CD8-positive, alpha-beta T cell (primary cell): ENCODE measurements at regions of chr9 and their contacts with region 1.

Region 1: GRCh38 chr9:70639853-70640814 is 225.7 kb upstream of the KLF9 start:
- DNase-seq: peak in 2 of 9 experiments; percentile 30 to 33
- ATAC-seq: no peak
- H3K4me3 ChIP-seq: no peak overlapping the region
- H3K4me3 Mint-ChIP-seq: no peak overlapping the region
- H3K27ac ChIP-seq: no peak overlapping the region
- H3K27ac Mint-ChIP-seq: no peak overlapping the region
- H3K4me1 ChIP-seq: no peaks in the 10 kb centered on the region
- H3K4me1 Mint-ChIP-seq: no peaks in the 10 kb centered on the region
- H3K27me3 ChIP-seq: no peaks in the 10 kb centered on the region
- H3K27me3 Mint-ChIP-seq: peaks cover 25% of the 10 kb centered on the region
- CTCF ChIP-seq: peak; percentile 42

Region 2: DNA sequence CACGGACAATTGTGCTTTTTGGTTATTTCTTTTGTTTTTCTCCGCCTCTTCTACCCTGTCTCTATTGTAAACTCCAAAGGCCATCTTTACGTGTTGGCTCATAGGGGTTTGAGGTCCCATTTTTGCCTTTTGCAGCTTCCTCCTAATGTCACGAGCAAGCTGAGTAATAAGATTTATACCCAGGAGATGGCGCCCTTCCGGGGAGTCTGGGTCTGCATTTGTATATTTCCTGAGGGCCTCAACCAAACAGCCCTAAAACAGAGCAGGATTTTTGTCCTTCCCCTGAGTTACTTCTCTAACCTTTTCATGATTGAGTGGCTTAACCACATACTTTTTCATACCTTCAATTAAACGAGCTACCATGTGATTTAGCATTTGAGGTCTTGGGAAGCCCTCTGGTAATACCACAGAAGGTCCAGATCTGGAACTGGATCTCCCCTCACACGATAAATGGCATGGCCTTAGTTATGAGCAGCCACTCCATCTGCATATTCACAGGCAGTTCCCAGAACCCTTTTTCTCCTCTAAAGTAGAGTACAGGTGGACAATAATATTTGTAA is 830.8 kb before region 1 on chr9:
- CTCF ChIA-PET with region 1: no interaction called
- POLR2A ChIA-PET with region 1: no interaction called
- intact Hi-C with region 1: no loop called
- DNase-seq: peak in 7 of 9 experiments; percentile 16 to 59 (median 25)
- ATAC-seq: peak; percentile 52
- H3K4me3 ChIP-seq: no peak overlapping the region
- H3K4me3 Mint-ChIP-seq: no peak overlapping the region
- H3K27ac ChIP-seq: no peak overlapping the region
- H3K27ac Mint-ChIP-seq: no peak overlapping the region
- H3K4me1 ChIP-seq: no peaks in the 10 kb centered on the region
- H3K4me1 Mint-ChIP-seq: no peaks in the 10 kb centered on the region
- H3K27me3 ChIP-seq: no peaks in the 10 kb centered on the region
- H3K27me3 Mint-ChIP-seq: peaks cover 3% of the 10 kb centered on the region
- CTCF ChIP-seq: peak; percentile 34

Region 3: DNA sequence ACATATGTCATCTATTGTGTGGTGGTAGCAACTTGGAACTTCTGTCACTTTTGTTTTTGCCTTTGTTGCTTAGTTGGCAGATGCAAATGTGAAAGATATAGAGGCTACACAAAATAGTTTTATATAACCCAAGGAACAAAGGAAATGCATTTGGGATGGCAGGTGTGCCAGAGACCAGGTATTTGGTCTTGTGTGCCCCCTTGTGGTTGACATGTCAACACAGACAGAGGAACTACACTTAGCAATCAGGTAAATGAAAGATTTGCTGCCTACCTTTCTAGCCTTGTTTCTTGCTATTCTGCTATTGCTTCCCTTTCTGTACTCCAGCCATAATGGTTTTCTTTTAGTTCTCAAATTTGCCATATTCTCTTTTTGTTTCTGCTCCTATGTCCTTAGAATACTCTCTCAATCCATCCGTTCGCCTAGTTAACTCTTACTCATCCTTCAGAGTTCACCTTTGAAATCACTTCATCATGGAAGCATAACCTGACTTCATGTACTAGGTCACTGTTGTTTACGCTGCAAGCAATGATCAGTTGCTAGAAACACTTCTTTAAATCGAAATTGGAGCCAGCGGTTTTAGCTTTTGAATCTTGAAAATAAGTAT is 361.7 kb after region 1 on chr9:
- CTCF ChIA-PET with region 1: no interaction called
- POLR2A ChIA-PET with region 1: no interaction called
- intact Hi-C with region 1: loop called in 1 of 2 experiments (anchors 5 kb)
- DNase-seq: peak in 2 of 9 experiments; percentile 4 to 17
- ATAC-seq: no peak
- H3K4me3 ChIP-seq: no peak overlapping the region
- H3K4me3 Mint-ChIP-seq: no peak overlapping the region
- H3K27ac ChIP-seq: no peak overlapping the region
- H3K27ac Mint-ChIP-seq: no peak overlapping the region
- H3K4me1 ChIP-seq: no peaks in the 10 kb centered on the region
- H3K4me1 Mint-ChIP-seq: no peaks in the 10 kb centered on the region
- H3K27me3 ChIP-seq: no peaks in the 10 kb centered on the region
- H3K27me3 Mint-ChIP-seq: no peaks in the 10 kb centered on the region
- CTCF ChIP-seq: no peak

Region 4: DNA sequence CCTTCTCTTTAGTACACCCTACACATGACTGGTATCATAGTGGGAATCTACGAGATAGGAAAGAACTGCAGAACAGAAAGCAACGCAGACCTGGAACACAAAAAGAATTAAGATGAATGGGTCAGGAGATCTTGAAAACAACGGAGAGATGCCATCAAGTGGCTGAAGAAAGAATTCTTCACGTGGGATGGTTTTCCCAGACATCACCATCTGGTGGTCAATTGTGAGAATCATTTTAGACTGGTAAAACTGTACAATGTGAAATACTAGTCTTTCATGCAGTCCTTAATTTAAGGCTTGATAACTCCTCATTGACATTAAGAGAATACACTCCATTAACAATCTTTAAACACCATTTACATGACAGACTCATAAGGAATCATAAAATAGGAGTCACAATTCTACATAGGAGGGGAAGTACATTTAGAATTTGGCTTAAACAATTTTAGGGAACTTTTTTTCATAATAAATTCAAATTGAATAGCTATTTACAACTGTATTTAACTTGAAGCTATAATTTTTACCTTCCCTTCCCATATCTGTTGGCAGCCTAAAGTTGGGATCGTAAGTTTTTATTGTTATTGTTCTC is 609.7 kb after region 1 on chr9:
- CTCF ChIA-PET with region 1: interaction called, 8 read pairs
- POLR2A ChIA-PET with region 1: no interaction called
- intact Hi-C with region 1: loop called (anchors 1 to 5 kb)
- DNase-seq: peak in 2 of 9 experiments; percentile 7 to 15
- ATAC-seq: no peak
- H3K4me3 ChIP-seq: no peak overlapping the region
- H3K4me3 Mint-ChIP-seq: no peak overlapping the region
- H3K27ac ChIP-seq: no peak overlapping the region
- H3K27ac Mint-ChIP-seq: no peak overlapping the region
- H3K4me1 ChIP-seq: no peaks in the 10 kb centered on the region
- H3K4me1 Mint-ChIP-seq: no peaks in the 10 kb centered on the region
- H3K27me3 ChIP-seq: no peaks in the 10 kb centered on the region
- H3K27me3 Mint-ChIP-seq: peaks cover 6% of the 10 kb centered on the region
- CTCF ChIP-seq: no peak